ENCODE measurements at regions of chr9 and their contacts with region 1.

Region 1: GRCh38 chr9:109012876-109013678 is at the start of gene CTNNAL1:
- DNase-seq: peak; percentile 75 to 95 (median 90)

Region 2: GRCh38 chr9:108543251-108543768 is 469.8 kb before region 1 on chr9:
- intact Hi-C with region 1: no loop called
- DNase-seq: no peak

Region 3: GRCh38 chr9:108933718-108934322 is 79.3 kb before region 1 on chr9 and contains the start of gene ELP1:
- intact Hi-C with region 1: loop called (anchors 10 kb)
- DNase-seq: peak; percentile 82 to 98 (median 95)

Region 4: DNA sequence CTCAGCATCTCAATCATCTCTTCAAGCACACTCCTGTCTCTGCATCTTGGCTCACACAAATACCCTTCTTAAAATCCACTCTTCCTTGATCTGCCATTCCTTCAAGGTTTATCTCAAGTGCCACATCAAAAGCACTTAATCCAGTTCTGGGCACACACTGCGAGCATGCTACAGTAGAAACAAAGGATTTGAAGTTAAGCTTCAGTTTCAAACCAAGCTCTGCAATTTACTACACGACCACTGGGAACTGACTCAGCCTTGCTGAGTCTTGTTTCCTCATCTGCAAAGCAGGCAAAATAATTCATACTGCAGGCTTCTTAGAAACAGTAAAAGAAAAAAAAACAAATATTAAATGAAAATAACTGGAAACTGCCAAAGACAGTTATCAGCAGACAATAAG is 50.7 kb after region 1 on chr9:
- intact Hi-C with region 1: no loop called
- DNase-seq: no peak